PC-3 (cell line): ENCODE measurements at regions of chr12 and their contacts with region 1.

Region 1: GRCh38 chr12:95336390-95337067 is 118.9 kb downstream of the VEZT start:
- DNase-seq: peak; percentile 92
- ATAC-seq: peak; percentile 76
- H3K4me3 ChIP-seq: peak overlapping the region; percentile 32
- H3K27ac ChIP-seq: peak overlapping the region; percentile 49
- H3K4me1 ChIP-seq: peaks cover 42% of the 10 kb centered on the region
- H3K27me3 ChIP-seq: no peaks in the 10 kb centered on the region
- CTCF ChIP-seq: peak; percentile 98

Region 2: DNA sequence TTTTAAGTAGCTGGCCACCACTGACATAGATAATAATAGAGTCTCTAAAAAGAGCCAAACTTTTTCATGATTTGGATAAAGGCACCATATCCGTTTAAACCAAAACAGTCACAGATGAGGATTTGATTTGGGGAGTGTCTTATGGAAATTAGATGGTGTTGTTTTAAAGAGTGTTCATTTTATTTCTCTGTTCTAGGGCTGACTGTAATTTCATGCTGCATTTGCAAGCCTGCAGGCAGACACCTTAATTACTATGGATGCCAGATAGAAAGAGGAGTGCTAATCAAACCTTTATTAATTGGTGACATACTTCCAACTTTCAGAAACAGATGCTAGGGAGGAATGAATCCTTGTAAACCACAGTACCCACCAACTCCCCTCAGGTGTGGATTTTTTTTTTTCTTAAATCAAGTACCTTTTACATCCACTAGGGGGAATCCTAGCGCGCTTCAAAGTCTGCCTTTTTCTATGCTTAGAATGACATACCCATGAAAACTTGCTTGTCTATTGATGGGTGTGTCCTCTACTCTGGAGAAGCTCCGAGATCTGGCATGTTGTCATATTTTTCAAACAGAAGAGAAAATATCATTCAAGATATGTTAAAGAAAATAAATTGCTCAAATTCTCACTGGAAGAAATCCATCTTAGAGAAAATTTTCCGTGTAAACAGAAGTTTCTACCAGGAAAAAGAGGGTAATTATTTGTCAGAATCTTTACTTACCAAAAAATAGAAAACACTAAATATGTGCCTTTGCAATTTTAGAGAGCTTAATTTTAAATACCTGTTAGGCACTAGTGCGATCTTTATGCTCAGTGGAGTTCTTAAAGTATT is 1202.3 kb before region 1 on chr12:
- CTCF ChIA-PET with region 1: no interaction called
- POLR2A ChIA-PET with region 1: no interaction called
- intact Hi-C with region 1: loop called (anchors 10 kb)
- DNase-seq: peak; percentile 79
- ATAC-seq: peak; percentile 65
- H3K4me3 ChIP-seq: peak overlapping the region; percentile 26; the same call in 1 of the 2 replicates
- H3K27ac ChIP-seq: no peak overlapping the region
- H3K4me1 ChIP-seq: no peaks in the 10 kb centered on the region
- H3K27me3 ChIP-seq: peaks cover 4% of the 10 kb centered on the region
- CTCF ChIP-seq: peak; percentile 82

Region 3: DNA sequence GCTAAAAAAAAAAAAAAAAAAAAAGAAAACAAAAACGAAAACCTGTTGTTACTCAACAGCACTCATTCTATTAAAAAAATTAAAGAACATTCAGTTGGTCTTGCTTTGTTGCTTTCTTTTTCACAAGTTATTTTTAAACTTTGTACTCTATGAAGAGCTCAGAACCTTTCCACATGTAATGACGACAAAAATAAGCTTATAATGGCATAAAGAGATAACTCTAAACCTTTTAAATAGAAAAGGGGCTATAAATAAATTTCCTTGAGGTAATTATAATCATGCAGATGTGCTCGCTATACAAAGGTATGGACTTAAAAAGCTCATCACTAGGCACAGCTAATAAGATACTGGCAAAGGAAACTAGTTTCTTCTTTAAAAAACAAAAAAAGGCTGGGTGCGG is 276.5 kb before region 1 on chr12:
- CTCF ChIA-PET with region 1: interaction called, 12 read pairs
- POLR2A ChIA-PET with region 1: no interaction called
- intact Hi-C with region 1: no loop called
- DNase-seq: no peak
- ATAC-seq: no peak
- H3K4me3 ChIP-seq: no peak overlapping the region
- H3K27ac ChIP-seq: no peak overlapping the region
- H3K4me1 ChIP-seq: no peaks in the 10 kb centered on the region
- H3K27me3 ChIP-seq: no peaks in the 10 kb centered on the region
- CTCF ChIP-seq: no peak

Region 4: DNA sequence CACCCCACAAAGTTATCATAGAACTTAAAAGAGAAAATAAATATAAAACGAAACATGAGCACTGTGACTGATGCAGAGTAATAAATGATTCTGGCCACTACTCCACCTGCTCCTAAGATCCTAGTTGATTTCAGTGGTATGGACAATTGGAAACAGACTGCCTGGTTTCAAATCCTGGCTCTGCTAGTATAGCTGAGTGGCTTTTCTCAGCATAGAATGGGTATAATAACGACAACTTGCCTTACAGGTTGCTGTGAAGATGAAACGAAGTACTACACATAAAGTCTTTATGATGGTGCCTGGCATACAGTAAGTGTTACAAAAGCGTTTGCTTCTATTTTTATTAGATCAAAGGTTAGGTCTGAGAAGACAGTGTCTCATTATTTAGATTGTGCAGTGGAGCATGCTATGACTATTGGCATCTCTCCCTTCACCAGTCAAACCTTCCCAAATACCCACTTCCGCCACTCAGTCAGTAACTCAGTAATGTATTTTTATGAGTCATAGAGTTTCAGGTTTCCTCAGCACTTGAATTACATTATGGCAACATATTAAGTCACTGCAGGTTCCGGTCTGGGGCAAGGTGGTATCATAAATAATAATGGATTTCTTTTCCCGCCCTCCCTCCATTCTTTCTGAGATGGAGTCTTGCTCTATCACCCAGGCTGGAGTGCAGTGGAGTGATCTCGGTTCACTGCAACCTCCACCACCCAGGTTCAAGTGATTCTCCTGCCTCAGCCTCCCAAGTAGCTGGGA is 233.4 kb before region 1 on chr12:
- CTCF ChIA-PET with region 1: no interaction called
- POLR2A ChIA-PET with region 1: no interaction called
- intact Hi-C with region 1: loop called (anchors 1 kb)
- DNase-seq: peak; percentile 99
- ATAC-seq: peak; percentile 70
- H3K4me3 ChIP-seq: peak overlapping the region; percentile 34
- H3K27ac ChIP-seq: peak overlapping the region; percentile 75
- H3K4me1 ChIP-seq: peaks cover 52% of the 10 kb centered on the region
- H3K27me3 ChIP-seq: no peaks in the 10 kb centered on the region
- CTCF ChIP-seq: no peak

Region 5: GRCh38 chr12:95217377-95218149 is 119.0 kb before region 1 on chr12 and contains the starts of genes FGD6 and VEZT:
- CTCF ChIA-PET with region 1: interaction called, 4 read pairs
- POLR2A ChIA-PET with region 1: no interaction called
- intact Hi-C with region 1: loop called (anchors 2 kb)
- DNase-seq: peak; percentile 99
- ATAC-seq: peak; percentile 74
- H3K4me3 ChIP-seq: peak within 1 kb of the TSS; percentile 93
- H3K27ac ChIP-seq: peak within 1 kb of the TSS; percentile 90
- H3K4me1 ChIP-seq: peaks cover 53% of the 10 kb centered on the region
- H3K27me3 ChIP-seq: no peaks in the 10 kb centered on the region
- CTCF ChIP-seq: peak; percentile 64
- total RNA-seq, gene FGD6: 14.2 and 14.3 TPM in 2 replicates
- total RNA-seq, gene VEZT: 83.6 and 85.9 TPM in 2 replicates

Region 6: DNA sequence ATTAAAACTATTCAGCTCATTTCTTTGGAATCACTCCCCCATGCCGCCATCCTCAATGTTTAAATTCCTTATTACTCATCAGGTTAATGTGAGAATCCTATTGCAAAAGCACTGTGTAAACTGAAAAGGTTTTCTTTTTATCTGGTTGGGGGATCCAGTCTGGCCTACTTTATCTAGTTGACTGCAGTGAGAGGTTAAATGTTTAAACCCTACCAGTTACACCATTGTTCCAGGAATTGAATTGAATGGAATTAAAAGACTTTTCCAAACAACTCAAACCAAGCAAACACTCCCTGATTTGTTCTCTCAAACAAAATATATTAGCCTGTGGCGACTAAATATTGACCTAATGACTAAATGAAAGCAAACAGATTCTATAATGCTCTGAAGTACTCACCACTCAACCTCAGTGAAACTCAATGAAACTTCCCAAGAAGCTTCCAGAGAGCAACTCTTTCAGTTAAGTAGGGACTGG is 18.4 kb before region 1 on chr12:
- CTCF ChIA-PET with region 1: interaction called, 5 read pairs
- POLR2A ChIA-PET with region 1: no interaction called
- intact Hi-C with region 1: loop called (anchors 1 kb)
- DNase-seq: peak; percentile 96
- ATAC-seq: peak; percentile 85
- H3K4me3 ChIP-seq: no peak overlapping the region
- H3K27ac ChIP-seq: peak overlapping the region; percentile 96
- H3K4me1 ChIP-seq: peaks cover 53% of the 10 kb centered on the region
- H3K27me3 ChIP-seq: no peaks in the 10 kb centered on the region
- CTCF ChIP-seq: no peak

Region 7: GRCh38 chr12:95533985-95534384 is 197.5 kb after region 1 on chr12:
- CTCF ChIA-PET with region 1: interaction called, 15 read pairs
- POLR2A ChIA-PET with region 1: no interaction called
- intact Hi-C with region 1: loop called (anchors 2 kb)
- DNase-seq: no peak
- ATAC-seq: no peak
- H3K4me3 ChIP-seq: no peak overlapping the region
- H3K27ac ChIP-seq: no peak overlapping the region
- H3K4me1 ChIP-seq: peaks cover 5% of the 10 kb centered on the region; the same call in 1 of the 2 replicates
- H3K27me3 ChIP-seq: no peaks in the 10 kb centered on the region
- CTCF ChIP-seq: no peak